Right ventricle myocardium inferior (tissue), 1 donor: ENCODE measurements at regions of chr20 and their contacts with region 1.

Region 1: DNA sequence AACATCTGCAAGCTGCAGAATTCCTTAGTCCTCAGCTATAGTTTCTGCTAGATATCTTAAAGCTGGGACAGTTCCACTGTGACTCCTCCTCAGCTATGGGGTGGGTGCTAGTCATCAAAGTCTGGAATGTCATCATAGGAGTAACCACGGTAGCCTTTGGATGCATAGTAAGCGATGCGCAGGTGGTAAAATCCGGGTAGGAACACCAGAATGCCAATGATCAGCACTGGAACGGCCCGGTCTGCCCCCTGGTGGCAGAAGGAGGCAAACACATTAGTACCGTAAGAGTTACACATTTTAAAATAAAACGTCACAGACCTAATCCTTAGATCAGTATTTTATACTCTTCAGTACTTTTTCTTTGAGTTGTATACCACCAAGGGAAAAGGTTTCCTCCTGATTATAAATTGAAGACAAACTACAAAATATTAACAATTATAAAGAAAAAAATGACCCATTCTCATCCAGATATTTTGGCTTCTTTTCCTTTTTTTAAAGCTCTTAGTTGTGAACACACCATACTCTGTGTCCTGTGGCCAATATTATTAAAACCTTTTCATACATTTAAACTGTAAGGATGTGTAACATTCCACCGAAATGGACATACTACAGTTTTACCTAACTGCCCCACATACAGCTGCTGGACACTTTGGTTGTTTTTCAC is 18.9 kb downstream of the PCNA start:
- DNase-seq: peak; percentile 91
- ATAC-seq: peak; percentile 71

Region 2: GRCh38 chr20:4613718-4614620 is 486.8 kb before region 1 on chr20:
- intact Hi-C with region 1: loop called (anchors 5 kb)
- DNase-seq: peak; percentile 70
- ATAC-seq: peak; percentile 66

Region 3: DNA sequence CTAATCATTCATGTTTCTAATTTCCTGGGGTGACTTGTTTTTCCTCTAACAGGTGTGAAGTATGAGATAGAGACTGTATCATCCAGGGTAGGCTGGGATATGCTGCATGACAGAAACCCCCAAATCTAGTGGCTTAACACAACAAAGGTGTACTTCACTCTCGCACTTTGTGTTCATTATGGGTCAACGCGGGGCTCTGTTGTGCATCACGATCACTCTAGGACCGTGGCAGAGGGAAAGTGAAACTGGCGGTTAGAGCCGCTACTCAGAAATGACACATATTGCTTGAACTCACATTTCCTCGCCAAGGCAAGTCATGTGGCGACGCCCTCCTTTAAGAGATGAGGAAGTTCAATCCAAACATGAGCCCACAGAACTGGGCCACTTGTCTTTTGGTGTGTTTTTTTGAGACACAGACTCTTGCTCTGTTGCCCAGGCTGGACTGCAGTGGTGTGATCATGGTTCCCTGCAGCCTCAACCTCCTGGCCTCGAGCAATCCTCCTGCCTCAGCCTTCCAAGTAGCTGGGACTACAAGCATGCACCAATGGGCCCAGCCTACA is 22.3 kb before region 1 on chr20:
- intact Hi-C with region 1: no loop called
- DNase-seq: peak; percentile 82
- ATAC-seq: peak; percentile 70